Left ventricle myocardium inferior (tissue), 1 donor: ENCODE measurements at regions of chrX and their contacts with region 1.

Region 1: DNA sequence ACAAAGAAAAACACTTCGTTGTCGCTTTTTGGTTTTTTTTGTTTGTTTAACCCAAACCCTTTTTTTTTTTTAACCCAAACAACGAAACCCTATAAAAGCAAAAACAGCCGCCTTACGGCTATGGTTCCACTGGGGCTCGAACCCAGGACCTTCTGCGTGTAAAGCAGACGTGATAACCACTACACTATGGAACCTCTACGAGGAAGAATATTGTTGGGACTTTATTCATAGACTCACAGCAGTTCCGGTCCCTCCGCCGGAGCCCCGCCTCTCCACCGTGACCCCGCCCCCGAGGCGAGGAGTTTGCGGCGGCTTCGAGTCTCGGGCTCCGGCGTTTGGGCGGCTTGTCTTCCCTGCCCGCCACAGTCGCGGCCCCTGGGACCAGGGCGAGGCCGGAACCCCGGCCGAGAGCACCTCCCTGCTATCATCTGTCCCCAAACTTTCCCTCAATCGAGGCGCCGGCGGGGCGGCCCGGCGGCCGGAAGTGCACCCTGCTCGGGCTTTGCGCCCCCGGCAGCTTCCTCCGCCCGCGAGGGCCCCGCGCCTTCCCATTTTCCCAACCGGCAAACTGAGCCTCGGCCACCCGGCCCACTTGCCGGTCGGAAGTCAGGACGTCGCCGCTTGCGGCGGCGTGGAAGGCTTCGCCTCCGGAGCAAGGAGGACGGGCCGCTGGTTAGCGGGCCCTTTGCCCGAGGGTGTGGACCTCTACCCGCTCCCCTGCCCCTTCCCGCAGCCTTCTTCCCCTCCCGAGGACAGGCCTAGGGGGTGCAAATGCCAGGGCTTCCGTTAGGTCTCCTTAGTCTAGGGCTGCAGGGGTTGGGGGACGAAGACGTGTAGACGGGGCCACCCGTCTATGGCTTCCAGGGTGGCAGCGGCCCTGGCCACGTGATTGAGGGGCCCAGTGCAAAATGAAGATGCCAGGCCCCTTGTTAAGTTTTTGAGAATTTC is 3.2 kb upstream of the RS1 start:
- DNase-seq: peak; percentile 75
- H3K4me3 ChIP-seq: peak overlapping the region; percentile 76
- H3K27ac ChIP-seq: peak overlapping the region; percentile 82
- H3K4me1 ChIP-seq: peaks cover 6% of the 10 kb centered on the region
- H3K27me3 ChIP-seq: no peaks in the 10 kb centered on the region
- CTCF ChIP-seq: no peak

Region 2: GRCh38 chrX:18886344-18887161 is 211.5 kb after region 1 on chrX:
- intact Hi-C with region 1: loop called (anchors 10 kb)
- DNase-seq: peak; percentile 74
- H3K4me3 ChIP-seq: peak overlapping the region; percentile 64
- H3K27ac ChIP-seq: peak overlapping the region; percentile 93
- H3K4me1 ChIP-seq: peaks cover 35% of the 10 kb centered on the region
- H3K27me3 ChIP-seq: no peaks in the 10 kb centered on the region
- CTCF ChIP-seq: peak; percentile 58